ENCODE measurements at regions of chr16 and their contacts with region 1.

Region 1: DNA sequence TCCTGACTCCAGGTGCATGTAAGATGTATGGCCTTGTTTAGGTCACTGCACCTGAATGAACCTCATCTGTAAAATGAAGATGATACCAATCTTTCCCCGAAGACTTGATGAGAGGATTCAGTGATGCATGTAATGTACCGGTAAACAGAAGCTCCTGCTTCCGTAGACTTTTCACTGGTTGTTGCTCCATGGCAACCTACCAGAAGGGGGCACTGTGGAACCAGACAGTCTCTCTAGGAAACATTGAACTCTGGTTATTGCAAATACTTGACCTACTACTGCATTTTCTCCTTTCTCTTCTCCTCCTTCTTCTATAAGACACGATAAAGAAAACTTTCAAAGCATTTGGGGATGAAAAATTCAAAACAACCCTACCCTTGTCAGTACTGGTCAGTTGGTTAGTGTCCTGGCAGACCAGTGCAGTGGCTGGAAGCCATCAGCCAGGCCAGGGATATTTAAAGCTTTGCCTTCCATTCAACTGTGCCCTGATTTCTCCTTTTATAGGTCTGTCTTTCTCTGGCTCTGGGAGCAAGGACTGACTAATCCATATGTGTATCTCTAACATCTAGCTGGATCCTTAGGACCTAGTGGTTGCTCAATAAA is 667.4 kb upstream of the SALL1 start:
- DNase-seq: no peak
- H3K4me3 ChIP-seq: no peak overlapping the region
- CTCF ChIP-seq: peak; percentile 77

Region 2: DNA sequence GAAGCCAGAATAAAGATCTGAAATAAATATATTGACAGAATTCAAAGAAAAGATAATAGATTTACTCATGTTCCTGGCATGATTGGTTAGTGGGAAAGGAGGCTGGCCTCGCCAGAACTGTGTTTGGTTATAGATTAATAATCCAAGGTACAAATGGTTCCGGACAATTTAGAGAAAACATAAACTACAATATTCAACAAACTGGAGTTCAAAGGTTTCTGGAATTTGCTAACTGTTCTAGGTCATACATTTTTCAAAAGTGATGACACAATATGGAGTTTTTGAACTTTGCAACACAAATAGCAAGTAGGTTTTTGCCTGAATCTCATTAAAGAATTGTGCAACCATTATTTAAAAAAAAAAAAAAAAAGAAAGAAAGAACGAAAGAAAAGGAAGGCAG is 415.7 kb before region 1 on chr16:
- CTCF ChIA-PET with region 1: no interaction called
- POLR2A ChIA-PET with region 1: no interaction called
- DNase-seq: no peak
- H3K4me3 ChIP-seq: no peak overlapping the region
- CTCF ChIP-seq: no peak

Region 3: DNA sequence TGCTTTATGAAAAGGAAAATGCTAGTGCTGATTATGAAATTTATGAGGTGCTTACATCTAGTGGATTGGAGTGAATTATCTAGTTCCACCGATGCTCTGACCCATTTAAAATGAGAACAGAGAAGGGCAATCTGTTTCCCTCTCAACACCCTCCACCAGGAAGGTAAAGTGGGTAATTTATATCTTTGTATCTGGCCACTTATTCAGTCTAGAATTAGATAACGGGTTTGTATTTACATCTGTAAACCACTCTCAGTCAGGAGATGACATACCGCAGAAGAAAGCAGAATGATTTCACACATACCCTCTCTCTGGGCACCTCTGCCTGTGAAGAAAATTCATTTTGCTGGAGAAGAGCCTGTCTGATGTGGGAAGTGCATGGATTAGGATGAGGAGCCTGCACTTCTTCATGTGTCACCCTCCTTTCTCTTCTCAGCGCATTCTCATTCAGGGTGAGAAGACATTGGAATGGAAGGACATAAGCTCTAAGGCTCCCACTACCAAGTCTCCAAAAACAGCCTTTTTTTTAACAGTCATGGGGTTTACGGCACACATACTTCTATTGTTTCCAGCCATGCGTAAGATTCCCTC is 20.7 kb before region 1 on chr16:
- CTCF ChIA-PET with region 1: interaction called, 12 read pairs
- POLR2A ChIA-PET with region 1: no interaction called
- DNase-seq: no peak
- H3K4me3 ChIP-seq: no peak overlapping the region
- CTCF ChIP-seq: no peak

Region 4: DNA sequence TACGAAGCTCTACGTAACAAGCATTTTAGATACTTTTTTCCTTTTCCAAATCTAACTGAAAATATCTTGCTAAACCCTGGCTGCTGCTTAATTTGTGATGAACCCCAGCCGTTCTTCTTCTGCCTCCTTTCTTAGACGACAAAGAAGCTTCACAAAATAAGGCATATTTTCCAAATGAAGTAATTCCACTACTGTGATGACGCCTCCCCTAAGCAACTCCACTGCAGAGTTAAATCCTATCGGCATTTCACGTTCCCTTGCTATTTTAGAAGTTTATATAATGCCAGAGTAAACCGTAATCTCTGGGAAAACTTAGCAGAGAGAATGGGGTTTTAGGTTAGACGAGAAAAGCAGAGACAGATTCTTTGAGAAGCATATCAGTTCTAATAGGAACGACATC is 15.7 kb after region 1 on chr16:
- CTCF ChIA-PET with region 1: interaction called, 21 read pairs
- POLR2A ChIA-PET with region 1: no interaction called
- DNase-seq: no peak
- H3K4me3 ChIP-seq: no peak overlapping the region
- CTCF ChIP-seq: no peak

Region 5: GRCh38 chr16:51952500-51952899 is 134.1 kb after region 1 on chr16:
- CTCF ChIA-PET with region 1: interaction called, 11 read pairs
- POLR2A ChIA-PET with region 1: no interaction called
- DNase-seq: no peak
- H3K4me3 ChIP-seq: no peak overlapping the region
- CTCF ChIP-seq: no peak

Region 6: DNA sequence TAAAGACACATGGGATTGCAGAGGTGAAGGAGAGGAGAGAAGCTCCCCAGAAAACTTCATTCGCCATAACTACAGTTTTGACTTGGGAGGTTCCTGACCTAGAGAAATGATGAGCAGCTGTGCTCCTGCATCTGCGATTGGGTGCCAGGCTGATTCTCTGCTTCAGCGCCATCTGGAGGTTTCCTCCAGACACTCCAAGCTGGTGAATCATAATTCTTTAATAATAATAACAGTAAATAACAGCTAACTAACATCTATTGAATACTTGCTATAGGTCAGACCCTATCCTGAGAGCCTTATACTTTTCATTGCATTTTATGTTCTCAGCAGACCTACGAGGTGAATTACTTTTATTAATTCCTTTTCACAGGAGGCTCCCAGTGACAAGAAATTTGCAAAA is 152.7 kb after region 1 on chr16:
- CTCF ChIA-PET with region 1: interaction called, 137 read pairs
- POLR2A ChIA-PET with region 1: no interaction called
- DNase-seq: no peak
- H3K4me3 ChIP-seq: no peak overlapping the region
- CTCF ChIP-seq: peak; percentile 45

Region 7: DNA sequence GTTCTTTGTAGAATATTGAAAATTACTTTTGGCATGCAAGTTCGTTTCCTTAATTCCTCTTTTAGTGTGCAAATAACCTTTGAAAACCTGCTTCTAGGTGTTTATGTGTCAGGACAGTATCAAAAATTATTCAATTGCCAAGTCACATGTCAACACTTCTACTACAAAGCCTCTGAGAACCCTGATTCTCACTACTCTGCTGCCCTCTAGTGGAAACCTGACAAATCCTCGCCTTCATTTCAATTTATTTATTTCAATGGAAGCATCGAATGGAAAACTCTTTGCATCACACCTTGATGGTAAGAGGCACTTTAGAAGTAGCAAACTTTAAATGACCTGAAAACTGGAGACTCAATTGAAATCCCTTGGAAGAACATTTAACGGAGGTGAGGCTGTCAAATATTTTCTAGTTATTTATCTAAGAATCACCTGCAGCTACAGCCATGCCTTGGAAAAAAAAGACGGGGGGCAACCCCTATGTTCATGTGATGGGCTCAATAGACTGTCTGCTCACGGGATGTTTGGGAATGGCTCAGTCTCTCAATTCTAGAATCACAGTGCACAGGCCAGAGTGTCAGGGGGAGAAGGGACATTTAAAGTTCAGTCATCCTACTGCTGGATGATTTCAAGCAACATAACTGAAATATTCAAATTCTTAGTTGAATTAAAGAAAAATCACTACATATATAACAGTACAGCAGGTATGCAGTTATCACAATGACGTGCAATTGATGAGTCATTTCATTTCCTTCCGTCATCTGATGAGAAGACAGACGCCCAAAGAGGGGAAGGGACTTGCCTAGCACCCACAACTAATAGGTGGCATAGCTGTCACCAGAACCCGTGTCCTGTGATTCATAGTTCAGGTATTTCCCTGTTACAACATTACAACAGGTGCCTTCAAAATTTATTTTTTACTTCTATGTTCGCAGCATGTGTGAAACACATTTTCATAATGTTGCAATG is 164.6 kb after region 1 on chr16:
- CTCF ChIA-PET with region 1: interaction called, 139 read pairs
- POLR2A ChIA-PET with region 1: no interaction called
- DNase-seq: peak; percentile 37
- H3K4me3 ChIP-seq: no peak overlapping the region
- CTCF ChIP-seq: peak; percentile 48